Left ventricle myocardium inferior (tissue), 1 donor: ENCODE measurements at regions of chr3 and their contacts with region 1.

Region 1: DNA sequence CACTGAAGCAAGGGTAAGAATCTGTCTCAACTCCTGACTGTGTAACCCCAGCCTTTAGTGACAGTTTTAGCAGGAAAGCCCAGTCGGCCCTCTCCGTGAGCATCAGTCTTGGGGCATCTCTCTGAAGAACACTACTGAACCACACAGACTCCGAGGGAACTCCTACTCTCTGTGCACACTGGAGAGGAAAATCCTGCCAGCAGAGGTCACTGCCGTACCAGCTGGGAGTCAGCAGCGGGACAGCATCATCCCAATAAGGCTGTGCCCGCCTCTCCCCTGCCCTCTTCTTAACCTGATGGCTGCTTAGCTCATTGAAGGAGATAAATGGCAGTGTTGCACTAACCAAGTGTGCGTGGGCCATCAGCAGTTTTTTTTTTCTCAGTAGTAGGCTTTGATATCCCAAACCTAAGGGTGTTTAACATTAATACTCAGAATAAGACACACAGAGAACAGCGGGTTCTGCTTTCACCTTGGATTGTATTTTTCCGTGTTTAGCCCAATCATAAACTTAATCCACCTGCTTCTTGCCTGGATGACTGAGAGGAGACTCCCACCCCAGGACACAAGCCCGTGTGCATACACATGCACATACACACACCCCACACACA is 26.6 kb upstream of the RASA2 start:
- DNase-seq: peak; percentile 83
- H3K4me3 ChIP-seq: no peak overlapping the region
- H3K27ac ChIP-seq: no peak overlapping the region
- H3K4me1 ChIP-seq: peaks cover 7% of the 10 kb centered on the region
- H3K27me3 ChIP-seq: no peaks in the 10 kb centered on the region
- CTCF ChIP-seq: peak; percentile 92

Region 2: GRCh38 chr3:141561426-141562034 is 101.3 kb after region 1 on chr3:
- intact Hi-C with region 1: loop called (anchors 5 kb)
- DNase-seq: no peak
- H3K4me3 ChIP-seq: no peak overlapping the region
- H3K27ac ChIP-seq: no peak overlapping the region
- H3K4me1 ChIP-seq: no peaks in the 10 kb centered on the region
- H3K27me3 ChIP-seq: no peaks in the 10 kb centered on the region
- CTCF ChIP-seq: peak; percentile 98